ENCODE measurements at regions of chr5 and their contacts with region 1.

Region 1: GRCh38 chr5:139204196-139204595 is 6.0 kb upstream of the SIL1 start:
- DNase-seq: no peak
- H3K4me3 ChIP-seq: no peak overlapping the region
- CTCF ChIP-seq: no peak
- POLR2A ChIP-seq: no peak

Region 2: DNA sequence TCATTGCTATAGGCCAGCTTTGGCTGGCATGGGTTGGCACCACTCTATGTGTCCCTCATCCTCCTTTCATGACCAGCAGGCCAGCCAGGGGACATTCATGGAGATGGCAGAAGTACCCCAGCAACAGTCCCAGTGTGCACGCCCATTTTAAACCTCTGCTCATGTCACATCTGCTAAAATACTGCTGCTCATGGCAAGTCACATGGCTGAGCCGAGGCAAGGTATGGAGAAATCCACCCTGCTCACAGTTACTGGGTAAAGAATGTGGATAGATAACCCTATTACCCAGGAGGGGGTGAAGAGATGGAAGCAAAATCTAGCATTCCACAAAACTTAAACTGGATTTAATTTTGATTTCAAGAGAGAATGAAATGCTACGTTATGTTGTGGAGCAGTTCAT is 534.1 kb before region 1 on chr5:
- intact Hi-C with region 1: loop called (anchors 5 kb)
- DNase-seq: no peak
- H3K4me3 ChIP-seq: no peak overlapping the region
- CTCF ChIP-seq: no peak
- POLR2A ChIP-seq: no peak